Left ventricle myocardium superior (tissue), 1 donor: ENCODE measurements at regions of chr6 and their contacts with region 1.

Region 1: GRCh38 chr6:137313928-137314855 is 95.0 kb upstream of the IFNGR1 start:
- DNase-seq: peak; percentile 84
- ATAC-seq: peak; percentile 96

Region 2: DNA sequence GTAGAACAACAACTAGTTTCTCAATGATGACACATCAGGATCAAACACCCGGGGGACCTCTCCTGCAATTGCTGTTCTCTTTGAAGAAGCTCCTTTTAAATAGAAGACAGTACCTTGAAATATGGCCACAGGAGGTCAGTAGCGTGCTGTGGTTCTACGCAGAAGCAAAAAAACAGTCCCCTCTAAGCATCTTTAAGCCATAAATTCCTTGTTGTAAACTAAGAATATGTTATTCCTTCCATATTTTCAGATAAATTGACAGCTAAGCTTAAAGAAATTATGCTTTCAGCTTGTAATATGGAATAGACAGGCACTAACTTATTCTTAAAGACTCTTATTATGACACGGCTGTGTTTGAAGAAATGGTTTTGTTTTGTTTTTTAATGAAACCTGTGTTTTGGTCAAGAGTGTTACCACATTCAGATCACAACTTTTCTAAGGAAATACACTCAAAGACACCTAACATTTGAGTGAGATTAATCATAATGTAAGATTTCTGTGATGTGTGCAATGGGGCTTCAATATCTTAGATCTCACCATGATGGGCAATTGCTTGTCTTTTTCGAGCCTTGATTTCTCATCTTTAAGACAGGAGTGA is 219.7 kb before region 1 on chr6:
- intact Hi-C with region 1: loop called (anchors 5 kb)
- DNase-seq: no peak
- ATAC-seq: peak; percentile 78

Region 3: GRCh38 chr6:137271245-137272183 is 42.7 kb before region 1 on chr6:
- intact Hi-C with region 1: loop called (anchors 5 kb)
- DNase-seq: no peak
- ATAC-seq: peak; percentile 70